ENCODE measurements at regions of chr17 and their contacts with region 1.

Region 1: DNA sequence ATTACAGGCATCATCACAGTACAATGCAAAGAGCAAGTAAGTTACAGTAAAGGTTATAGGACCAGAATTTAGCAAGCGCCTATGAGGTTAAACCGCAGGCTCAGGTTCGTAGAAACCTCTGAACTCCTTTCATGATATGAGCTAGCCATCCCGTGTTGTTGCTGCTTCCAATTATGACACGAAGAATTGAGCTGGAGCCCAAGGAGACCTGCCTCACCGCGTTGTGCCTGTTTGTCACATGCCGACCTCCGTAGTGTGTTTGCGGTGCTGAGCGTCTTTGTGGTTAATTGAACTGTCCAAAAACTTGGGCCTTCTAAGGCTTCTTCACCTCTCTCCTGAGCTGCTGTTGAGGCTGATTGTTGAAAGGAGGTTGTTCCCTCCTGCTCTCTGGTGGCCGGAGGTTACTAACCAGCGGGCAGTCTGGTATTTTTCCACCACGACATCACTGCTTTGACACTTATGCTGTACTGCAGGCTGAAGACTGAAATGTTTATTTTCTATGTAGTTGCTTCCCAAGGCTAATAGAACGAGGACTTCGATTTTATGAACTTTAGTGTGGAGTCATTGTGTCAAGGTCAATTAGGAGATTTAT is 67.5 kb downstream of the SEC14L1 start:
- DNase-seq: peak in 2 of 5 donors; percentile 64 to 78
- H3K4me3 ChIP-seq: no peak overlapping the region
- H3K27ac ChIP-seq: peak overlapping the region in 1 of 2 donors; percentile 1
- H3K4me1 ChIP-seq: peaks cover 0 to 7% (median 0%) of the 10 kb centered on the region in 3 donors
- H3K27me3 ChIP-seq: no peaks in the 10 kb centered on the region
- CTCF ChIP-seq: peak; percentile 44

Region 2: DNA sequence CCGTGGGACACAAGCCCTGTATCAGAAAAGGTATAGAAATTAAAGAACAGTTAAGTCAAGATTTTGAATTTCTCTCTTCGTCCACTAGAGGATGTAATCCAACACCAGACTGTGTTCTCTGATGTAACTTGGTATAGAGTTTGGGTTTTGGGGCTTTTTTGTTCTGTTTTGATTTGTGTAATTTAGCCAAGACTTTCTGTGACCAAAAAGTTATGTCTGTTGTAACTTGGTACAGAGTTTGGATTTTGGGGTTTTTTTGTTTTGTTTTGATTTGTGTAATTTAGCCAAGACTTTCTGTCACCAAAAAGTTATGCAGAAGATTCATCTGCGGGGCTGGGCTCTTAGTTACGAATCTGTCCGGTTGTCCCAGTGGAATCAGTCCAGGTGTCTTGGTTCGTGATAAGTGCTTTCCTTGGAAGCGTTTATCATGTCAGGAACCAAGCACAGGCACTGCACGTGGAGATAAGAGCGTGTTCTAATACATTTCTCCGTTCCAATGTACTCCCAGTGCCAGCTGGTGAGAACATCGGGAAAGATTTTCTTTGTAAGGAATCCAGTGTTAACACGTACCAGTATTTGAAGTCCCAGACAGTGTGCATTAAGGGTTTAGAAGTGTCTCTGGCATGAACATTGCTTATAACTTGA is 111.6 kb before region 1 on chr17:
- intact Hi-C with region 1: loop called (anchors 10 kb)
- DNase-seq: peak in 1 of 5 donors; percentile 84
- H3K4me3 ChIP-seq: no peak overlapping the region
- H3K27ac ChIP-seq: peak overlapping the region; percentile 77 to 82
- H3K4me1 ChIP-seq: peaks cover 3 to 21% (median 21%) of the 10 kb centered on the region in 3 donors
- H3K27me3 ChIP-seq: no peaks in the 10 kb centered on the region
- CTCF ChIP-seq: peak; percentile 81